Dendritic cell treated with granulocyte-macrophage colony-stimulating factor and Interleukin-4, amounts not matched to agents 40 ng/mL and 50 ng/mL, for 4 days (primary cell): ENCODE measurements at regions of chr1 and their contacts with region 1.

Region 1: GRCh38 chr1:101357444-101357986 is 120.7 kb downstream of the S1PR1 start:
- H3K4me3 Mint-ChIP-seq: no peak overlapping the region
- H3K27ac Mint-ChIP-seq: no peak overlapping the region
- H3K4me1 Mint-ChIP-seq: no peaks in the 10 kb centered on the region
- H3K27me3 Mint-ChIP-seq: no peaks in the 10 kb centered on the region

Region 2: GRCh38 chr1:100921109-100921706 is 436.3 kb before region 1 on chr1:
- intact Hi-C with region 1: loop called (anchors 1 kb)
- H3K4me3 Mint-ChIP-seq: no peak overlapping the region
- H3K27ac Mint-ChIP-seq: no peak overlapping the region
- H3K4me1 Mint-ChIP-seq: peaks cover 8% of the 10 kb centered on the region
- H3K27me3 Mint-ChIP-seq: no peaks in the 10 kb centered on the region

Region 3: GRCh38 chr1:101309334-101310311 is 47.9 kb before region 1 on chr1:
- intact Hi-C with region 1: loop called (anchors 1 kb)
- H3K4me3 Mint-ChIP-seq: peak overlapping the region; percentile 70
- H3K27ac Mint-ChIP-seq: peak overlapping the region; percentile 65
- H3K4me1 Mint-ChIP-seq: peaks cover 12% of the 10 kb centered on the region
- H3K27me3 Mint-ChIP-seq: peaks cover 13% of the 10 kb centered on the region